ENCODE measurements at regions of chr20 and their contacts with region 1.

Region 1: DNA sequence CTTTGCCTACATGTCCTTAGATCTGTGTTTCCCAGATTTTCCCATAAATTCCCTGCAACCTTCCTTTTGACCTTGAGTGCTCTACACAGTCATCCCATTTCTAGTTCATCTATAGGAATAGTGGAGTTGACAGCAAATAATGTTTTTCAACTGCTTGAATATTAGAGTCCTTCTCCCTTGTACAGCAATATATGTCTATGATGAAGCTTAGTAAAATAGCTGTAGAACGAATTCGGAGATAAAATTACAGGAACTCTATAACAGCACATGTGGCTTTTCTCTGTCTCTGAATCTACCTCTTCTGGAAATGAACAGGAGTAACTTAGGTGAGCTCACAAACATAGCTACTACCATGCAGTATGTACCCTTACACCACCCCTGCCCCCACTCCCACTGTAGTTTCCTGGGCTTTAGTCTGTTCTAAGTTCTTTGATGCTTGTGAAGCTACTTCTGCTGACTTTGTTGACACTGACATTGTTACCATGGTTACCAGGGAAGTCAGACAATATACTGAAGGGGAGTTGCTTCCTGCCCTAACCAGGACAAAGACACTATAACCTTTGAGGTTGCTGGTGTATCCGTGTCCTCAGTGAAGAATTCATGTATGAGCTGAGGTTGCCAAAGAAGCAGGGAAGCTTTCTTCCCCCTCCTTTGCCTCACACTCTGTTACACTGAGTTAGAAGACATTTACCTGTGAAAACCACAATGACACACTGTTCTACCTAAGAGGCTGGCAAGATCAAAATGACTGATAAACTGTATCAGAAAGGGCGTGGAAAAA is 35.8 kb upstream of the SHLD1 start:
- DNase-seq: peak; percentile 30 to 95 (median 86)
- ATAC-seq: peak; percentile 88 to 91 (median 91)
- H3K4me3 ChIP-seq: no peak overlapping the region
- H3K4me3 Mint-ChIP-seq: peak overlapping the region; percentile 14 to 73 (median 35)
- H3K27ac ChIP-seq: peak overlapping the region; percentile 86
- H3K27ac Mint-ChIP-seq: peak overlapping the region; percentile 92 to 99
- H3K4me1 ChIP-seq: peaks cover 18 to 26% of the 10 kb centered on the region in 2 experiments
- H3K4me1 Mint-ChIP-seq: peaks cover 50 to 54% (median 51%) of the 10 kb centered on the region in 3 donors
- H3K27me3 ChIP-seq: no peaks in the 10 kb centered on the region
- H3K27me3 Mint-ChIP-seq: no peaks in the 10 kb centered on the region

Region 2: DNA sequence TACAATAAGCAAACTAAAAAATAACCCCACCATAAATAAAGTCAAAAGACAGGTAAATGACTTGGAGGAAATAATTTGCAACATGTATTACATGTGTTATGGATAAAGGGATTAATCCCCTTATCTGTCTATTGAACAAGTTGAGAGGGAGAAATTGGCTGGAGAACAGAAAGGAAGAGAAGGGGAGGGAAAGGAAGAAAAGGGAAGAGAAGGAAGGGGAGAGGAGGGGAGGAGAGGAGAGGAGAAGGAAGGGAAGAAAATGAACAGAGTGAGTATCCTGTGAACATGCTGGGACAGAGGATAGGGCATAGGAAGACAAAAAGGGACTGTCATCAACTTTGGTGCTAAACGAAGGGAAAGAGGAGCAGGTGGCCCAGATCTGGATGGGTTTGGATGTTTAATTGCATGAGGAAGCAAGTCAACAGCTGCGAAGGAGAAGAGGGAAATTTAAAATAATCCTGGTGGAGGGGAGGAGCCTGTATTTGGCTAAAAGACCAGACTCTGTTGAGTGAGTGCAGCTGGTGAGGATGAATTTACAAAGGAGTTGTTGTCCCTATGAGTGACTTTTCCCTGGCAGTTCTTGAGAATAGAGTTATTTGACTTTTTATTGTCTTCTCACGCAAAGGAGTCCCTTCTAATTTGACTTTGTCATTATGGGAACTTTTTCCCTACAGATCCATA is 21.5 kb after region 1 on chr20:
- CTCF ChIA-PET with region 1: interaction called in 1 of 2 experiments, 3 read pairs
- POLR2A ChIA-PET with region 1: interaction called, 4 to 14 read pairs
- DNase-seq: no peak
- ATAC-seq: no peak
- H3K4me3 ChIP-seq: no peak overlapping the region
- H3K4me3 Mint-ChIP-seq: peak overlapping the region in 1 of 3 donors; percentile 49
- H3K27ac ChIP-seq: peak overlapping the region; percentile 80
- H3K27ac Mint-ChIP-seq: peak overlapping the region; percentile 98 to 99
- H3K4me1 ChIP-seq: peaks cover 15 to 25% of the 10 kb centered on the region in 2 experiments
- H3K4me1 Mint-ChIP-seq: peaks cover 32 to 50% (median 35%) of the 10 kb centered on the region in 3 donors
- H3K27me3 ChIP-seq: no peaks in the 10 kb centered on the region
- H3K27me3 Mint-ChIP-seq: no peaks in the 10 kb centered on the region

Region 3: GRCh38 chr20:5749952-5750779 is 35.7 kb after region 1 on chr20 and contains the start of gene SHLD1:
- CTCF ChIA-PET with region 1: interaction called in 1 of 2 experiments, 11 read pairs
- POLR2A ChIA-PET with region 1: interaction called, 3 to 4 read pairs
- DNase-seq: peak; percentile 67 to 90 (median 77)
- ATAC-seq: peak; percentile 94 to 98 (median 97)
- H3K4me3 ChIP-seq: peak within 1 kb of the TSS; percentile 75 to 96
- H3K4me3 Mint-ChIP-seq: peak within 1 kb of the TSS; percentile 83 to 90 (median 90)
- H3K27ac ChIP-seq: peak within 1 kb of the TSS; percentile 42
- H3K27ac Mint-ChIP-seq: peak within 1 kb of the TSS; percentile 91
- H3K4me1 ChIP-seq: peaks cover 6 to 13% of the 10 kb centered on the region in 2 experiments
- H3K4me1 Mint-ChIP-seq: peaks cover 24 to 32% (median 29%) of the 10 kb centered on the region in 3 donors
- H3K27me3 ChIP-seq: no peaks in the 10 kb centered on the region
- H3K27me3 Mint-ChIP-seq: no peaks in the 10 kb centered on the region
- total RNA-seq, gene SHLD1: 10.0 to 15.8 (median 14.2) TPM

Region 4: GRCh38 chr20:5788385-5788895 is 74.0 kb after region 1 on chr20:
- CTCF ChIA-PET with region 1: interaction called in 1 of 2 experiments, 10 read pairs
- POLR2A ChIA-PET with region 1: interaction called in 1 of 2 experiments, 3 read pairs
- DNase-seq: peak; percentile 19 to 93 (median 73)
- ATAC-seq: peak; percentile 87 to 99 (median 96)
- H3K4me3 ChIP-seq: no peak overlapping the region
- H3K4me3 Mint-ChIP-seq: no peak overlapping the region
- H3K27ac ChIP-seq: no peak overlapping the region
- H3K27ac Mint-ChIP-seq: peak overlapping the region in 1 of 2 donors; percentile 2
- H3K4me1 ChIP-seq: no peaks in the 10 kb centered on the region
- H3K4me1 Mint-ChIP-seq: peaks cover 0 to 15% (median 8%) of the 10 kb centered on the region in 3 donors
- H3K27me3 ChIP-seq: no peaks in the 10 kb centered on the region
- H3K27me3 Mint-ChIP-seq: no peaks in the 10 kb centered on the region

Region 5: DNA sequence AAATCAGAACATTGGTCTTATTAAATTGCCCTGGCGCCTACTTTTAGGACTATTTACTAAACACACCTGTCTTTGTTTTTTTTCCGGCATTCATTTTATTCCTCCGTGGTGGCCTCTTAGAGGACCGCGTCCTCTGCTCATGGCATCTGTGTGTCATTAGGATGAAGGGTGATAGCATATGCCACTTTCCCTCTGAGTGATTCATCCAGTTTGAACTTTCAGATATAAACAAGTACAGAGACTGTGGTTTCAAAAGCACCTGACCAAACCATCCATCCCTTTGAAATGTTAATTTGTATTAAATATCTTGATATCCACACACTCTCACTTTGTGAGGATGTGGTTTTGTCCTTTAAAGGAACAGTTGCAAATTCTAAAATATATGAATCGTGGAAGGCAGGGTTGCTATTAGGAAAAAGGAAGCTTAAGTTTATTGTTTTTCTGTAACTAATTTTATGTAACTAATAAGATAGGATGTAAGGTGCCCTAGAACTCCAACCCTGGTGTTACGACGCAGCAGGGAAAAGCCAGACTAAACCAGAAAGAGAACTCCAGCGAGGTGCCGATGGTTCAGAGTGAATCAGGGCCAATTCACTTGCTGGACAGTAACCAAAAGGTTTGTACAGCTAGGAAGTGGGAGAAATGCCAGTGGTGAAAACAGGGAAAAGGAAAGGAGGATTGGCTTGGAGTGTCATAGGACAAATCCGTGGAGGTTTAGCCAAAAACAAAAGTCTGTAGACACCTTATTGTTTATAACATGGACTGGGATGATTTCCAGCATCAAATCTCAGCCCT is 134.5 kb after region 1 on chr20:
- CTCF ChIA-PET with region 1: no interaction called
- POLR2A ChIA-PET with region 1: no interaction called
- DNase-seq: peak in 1 of 35 experiments; percentile 31
- ATAC-seq: peak in 1 of 4 experiments; percentile 31
- H3K4me3 ChIP-seq: no peak overlapping the region
- H3K4me3 Mint-ChIP-seq: peak overlapping the region in 1 of 3 donors; percentile 31
- H3K27ac ChIP-seq: no peak overlapping the region
- H3K27ac Mint-ChIP-seq: peak overlapping the region; percentile 49 to 62
- H3K4me1 ChIP-seq: peaks cover 2 to 9% of the 10 kb centered on the region in 2 experiments
- H3K4me1 Mint-ChIP-seq: peaks cover 15 to 52% (median 28%) of the 10 kb centered on the region in 3 donors
- H3K27me3 ChIP-seq: no peaks in the 10 kb centered on the region
- H3K27me3 Mint-ChIP-seq: no peaks in the 10 kb centered on the region

Region 6: GRCh38 chr20:5918856-5919625 is 204.6 kb after region 1 on chr20:
- CTCF ChIA-PET with region 1: no interaction called
- POLR2A ChIA-PET with region 1: interaction called in 1 of 2 experiments, 11 read pairs
- DNase-seq: peak in 1 of 35 experiments; percentile 35
- ATAC-seq: peak; percentile 58 to 93 (median 88)
- H3K4me3 ChIP-seq: no peak overlapping the region
- H3K4me3 Mint-ChIP-seq: no peak overlapping the region
- H3K27ac ChIP-seq: no peak overlapping the region
- H3K27ac Mint-ChIP-seq: peak overlapping the region; percentile 3 to 61
- H3K4me1 ChIP-seq: peaks cover 0 to 6% of the 10 kb centered on the region in 2 experiments
- H3K4me1 Mint-ChIP-seq: peaks cover 0 to 16% (median 16%) of the 10 kb centered on the region in 3 donors
- H3K27me3 ChIP-seq: peaks cover 3 to 4% of the 10 kb centered on the region in 2 experiments
- H3K27me3 Mint-ChIP-seq: peaks cover 20 to 25% of the 10 kb centered on the region in 2 donors